Adrenal gland (tissue), 19 donors: ENCODE measurements at regions of chr1 and their contacts with region 1.

Region 1: GRCh38 chr1:113978863-113979702 is at the start of gene OLFML3:
- DNase-seq: peak; percentile 80 to 96 (median 86)
- H3K4me3 ChIP-seq: peak within 1 kb of the TSS in 1 of 4 donors; percentile 38
- H3K27ac ChIP-seq: peak within 1 kb of the TSS in 2 of 5 donors; percentile 50 to 53
- H3K4me1 ChIP-seq: peaks cover 11 to 30% of the 10 kb centered on the region in 2 donors
- H3K27me3 ChIP-seq: no peaks in the 10 kb centered on the region
- CTCF ChIP-seq: peak; percentile 43 to 84 (median 74)
- POLR2A ChIP-seq: no peak
- total RNA-seq, gene OLFML3: 13.6 to 99.6 (median 35.3) TPM

Region 2: GRCh38 chr1:113898241-113898814 is 80.8 kb before region 1 on chr1:
- intact Hi-C with region 1: no loop called
- DNase-seq: no peak
- H3K4me3 ChIP-seq: no peak overlapping the region
- H3K27ac ChIP-seq: no peak overlapping the region
- H3K4me1 ChIP-seq: peaks cover 0 to 23% of the 10 kb centered on the region in 2 donors
- H3K27me3 ChIP-seq: no peaks in the 10 kb centered on the region
- CTCF ChIP-seq: no peak
- POLR2A ChIP-seq: no peak

Region 3: DNA sequence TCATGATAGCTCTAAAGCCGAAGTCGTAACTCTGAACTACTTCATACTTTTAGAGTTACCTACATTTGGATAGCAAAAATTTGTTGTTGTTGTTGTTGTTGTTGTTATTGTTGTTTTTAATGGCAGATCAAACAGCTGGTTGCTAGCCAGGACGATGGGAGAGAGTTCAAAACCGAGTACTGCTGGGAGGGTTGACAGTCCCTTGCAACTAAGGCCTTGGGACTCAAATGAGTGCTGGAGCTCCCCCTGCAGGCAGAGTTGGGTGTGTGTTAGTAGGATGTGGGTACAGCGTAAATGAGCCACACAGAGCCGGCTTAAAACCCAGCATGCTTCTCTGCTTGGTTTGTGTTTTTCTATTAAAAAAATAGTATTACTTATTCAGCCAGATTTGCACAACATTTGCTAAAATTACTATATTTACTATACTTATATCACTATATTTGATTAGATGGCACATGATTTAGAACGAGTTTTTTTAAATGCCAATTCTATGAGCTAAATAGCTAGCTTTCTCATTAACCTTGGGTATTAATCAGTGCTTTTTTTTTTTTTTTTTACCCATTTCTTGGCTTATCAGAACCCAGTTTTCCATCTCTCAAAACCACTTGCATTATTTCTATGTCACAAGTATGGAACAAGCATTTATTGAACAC is 303.8 kb after region 1 on chr1:
- intact Hi-C with region 1: loop called (anchors 5 to 10 kb)
- DNase-seq: peak; percentile 84 to 97 (median 92)
- H3K4me3 ChIP-seq: no peak overlapping the region
- H3K27ac ChIP-seq: no peak overlapping the region
- H3K4me1 ChIP-seq: no peaks in the 10 kb centered on the region
- H3K27me3 ChIP-seq: no peaks in the 10 kb centered on the region
- CTCF ChIP-seq: peak; percentile 76 to 91 (median 88)
- POLR2A ChIP-seq: no peak